CD8-positive, alpha-beta memory T cell (primary cell): ENCODE measurements at regions of chr22 and their contacts with region 1.

Region 1: GRCh38 chr22:22787786-22788459 is 99.7 kb upstream of the IGLL5 start:
- DNase-seq: peak; percentile 46 to 84 (median 57)
- H3K4me3 ChIP-seq: no peak overlapping the region
- H3K4me3 Mint-ChIP-seq: peak overlapping the region; percentile 22 to 83 (median 52)
- H3K27ac ChIP-seq: peak overlapping the region; percentile 38
- H3K27ac Mint-ChIP-seq: peak overlapping the region; percentile 78 to 99 (median 90)
- H3K4me1 ChIP-seq: peaks cover 57% of the 10 kb centered on the region
- H3K4me1 Mint-ChIP-seq: peaks cover 79 to 92% (median 80%) of the 10 kb centered on the region in 3 donors
- H3K27me3 ChIP-seq: no peaks in the 10 kb centered on the region
- H3K27me3 Mint-ChIP-seq: no peaks in the 10 kb centered on the region

Region 2: DNA sequence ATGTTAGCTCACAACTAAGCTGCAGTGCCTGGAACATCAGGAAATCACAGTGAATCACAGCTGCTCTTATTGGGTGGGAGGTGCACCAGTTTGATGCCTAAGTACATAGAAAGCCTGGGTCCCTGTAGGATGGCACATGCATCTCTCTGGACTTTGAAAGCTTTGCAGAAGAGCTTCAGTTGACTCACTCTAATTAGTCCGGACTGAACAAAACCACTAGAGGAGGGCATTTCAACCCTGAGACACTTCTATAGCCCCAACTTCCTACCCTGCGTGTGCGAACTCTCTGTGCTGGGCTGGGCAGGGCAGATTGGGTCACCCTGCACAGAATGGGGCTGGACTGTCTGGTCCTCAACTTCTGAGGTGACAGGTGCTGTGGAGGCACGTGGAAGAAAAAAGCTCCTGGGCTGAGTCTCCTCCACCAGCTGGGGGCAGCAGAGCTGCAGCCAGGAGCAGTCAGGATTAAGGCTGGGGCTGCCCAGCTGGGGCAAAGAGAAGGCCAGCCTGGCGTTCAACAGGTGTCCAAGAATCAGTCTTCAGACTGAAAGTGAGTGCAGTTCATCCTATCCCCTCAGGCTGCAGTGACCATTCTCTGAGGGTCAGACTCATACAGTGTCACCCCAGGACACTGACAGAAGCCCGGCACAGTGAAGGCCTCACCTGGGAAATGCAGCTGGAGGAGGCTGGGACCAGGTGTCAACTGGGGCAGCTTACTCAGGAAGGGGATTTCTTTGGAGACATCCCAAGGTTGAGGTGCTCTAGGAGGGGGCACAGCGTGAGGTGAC is 121.4 kb before region 1 on chr22:
- CTCF ChIA-PET with region 1: no interaction called
- POLR2A ChIA-PET with region 1: no interaction called
- DNase-seq: peak in 1 of 5 donors; percentile 14
- H3K4me3 ChIP-seq: no peak overlapping the region
- H3K4me3 Mint-ChIP-seq: no peak overlapping the region
- H3K27ac ChIP-seq: no peak overlapping the region
- H3K27ac Mint-ChIP-seq: peak overlapping the region in 1 of 8 donors; percentile 54
- H3K4me1 ChIP-seq: no peaks in the 10 kb centered on the region
- H3K4me1 Mint-ChIP-seq: no peaks in the 10 kb centered on the region
- H3K27me3 ChIP-seq: no peaks in the 10 kb centered on the region
- H3K27me3 Mint-ChIP-seq: peaks cover 1 to 25% of the 10 kb centered on the region in 2 donors

Region 3: DNA sequence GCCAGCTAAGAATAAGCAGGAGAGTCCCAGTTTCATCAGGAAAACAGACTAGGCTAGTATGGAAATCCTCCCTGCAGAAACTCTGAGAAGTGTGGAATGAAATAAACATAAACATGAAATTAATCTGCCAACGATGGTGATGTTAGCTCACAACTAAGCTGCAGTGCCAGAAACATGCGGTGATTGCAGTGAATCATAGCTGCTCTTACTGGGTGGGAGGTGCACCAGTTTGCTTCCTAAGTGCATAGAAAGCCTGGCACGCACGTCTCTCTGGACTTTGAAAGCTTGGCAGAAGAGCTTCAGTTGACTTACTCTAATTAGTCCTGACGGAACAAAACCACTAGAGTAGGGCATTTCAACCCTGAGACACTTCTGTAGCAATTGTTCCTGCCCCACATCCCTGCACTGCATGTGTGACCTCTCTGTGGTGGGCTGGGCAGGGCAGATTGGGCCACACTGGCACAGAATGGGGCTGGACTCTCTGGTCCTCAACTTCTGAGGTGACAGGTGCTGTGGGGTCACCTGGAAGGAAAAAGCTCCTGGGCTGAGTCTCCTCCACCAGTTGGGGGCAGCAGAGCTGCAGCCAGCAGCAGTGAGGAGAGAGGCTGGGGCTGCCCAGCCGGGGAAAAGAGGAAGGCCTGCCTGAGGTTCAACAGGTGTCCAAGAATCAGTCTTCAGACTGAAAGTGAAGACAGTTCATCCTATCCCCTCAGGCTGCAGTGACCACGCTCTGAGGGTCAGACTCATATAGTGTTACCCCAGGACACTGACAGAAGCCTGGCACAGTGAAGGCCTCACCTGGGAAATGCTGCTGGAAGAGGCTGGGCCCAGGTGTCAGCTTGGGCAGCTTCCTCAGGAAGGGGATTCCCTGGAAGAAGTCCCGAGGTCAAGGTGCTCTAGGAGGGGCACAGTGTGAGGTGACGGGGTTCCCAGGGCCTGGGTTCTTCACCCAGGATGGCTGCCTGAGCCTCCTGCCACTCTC is 103.1 kb before region 1 on chr22:
- CTCF ChIA-PET with region 1: no interaction called
- POLR2A ChIA-PET with region 1: no interaction called
- DNase-seq: no peak
- H3K4me3 ChIP-seq: no peak overlapping the region
- H3K4me3 Mint-ChIP-seq: no peak overlapping the region
- H3K27ac ChIP-seq: no peak overlapping the region
- H3K27ac Mint-ChIP-seq: no peak overlapping the region
- H3K4me1 ChIP-seq: no peaks in the 10 kb centered on the region
- H3K4me1 Mint-ChIP-seq: no peaks in the 10 kb centered on the region
- H3K27me3 ChIP-seq: no peaks in the 10 kb centered on the region
- H3K27me3 Mint-ChIP-seq: peaks cover 0 to 2% of the 10 kb centered on the region in 2 donors

Region 4: GRCh38 chr22:22737590-22737989 is 50.3 kb before region 1 on chr22:
- CTCF ChIA-PET with region 1: no interaction called
- POLR2A ChIA-PET with region 1: no interaction called
- DNase-seq: peak in 1 of 5 donors; percentile 45
- H3K4me3 ChIP-seq: no peak overlapping the region
- H3K4me3 Mint-ChIP-seq: peak overlapping the region in 6 of 7 donors; percentile 6 to 72 (median 47)
- H3K27ac ChIP-seq: no peak overlapping the region
- H3K27ac Mint-ChIP-seq: peak overlapping the region; percentile 16 to 86 (median 50)
- H3K4me1 ChIP-seq: peaks cover 36% of the 10 kb centered on the region
- H3K4me1 Mint-ChIP-seq: peaks cover 62 to 67% (median 65%) of the 10 kb centered on the region in 3 donors
- H3K27me3 ChIP-seq: no peaks in the 10 kb centered on the region
- H3K27me3 Mint-ChIP-seq: peaks cover 6 to 14% of the 10 kb centered on the region in 2 donors

Region 5: GRCh38 chr22:22770280-22770871 is 17.5 kb before region 1 on chr22:
- CTCF ChIA-PET with region 1: interaction called, 31 read pairs
- POLR2A ChIA-PET with region 1: interaction called, 4 read pairs
- DNase-seq: peak; percentile 25 to 62 (median 31)
- H3K4me3 ChIP-seq: no peak overlapping the region
- H3K4me3 Mint-ChIP-seq: peak overlapping the region in 2 of 7 donors; percentile 0 to 15
- H3K27ac ChIP-seq: no peak overlapping the region
- H3K27ac Mint-ChIP-seq: peak overlapping the region; percentile 76 to 91 (median 84)
- H3K4me1 ChIP-seq: peaks cover 4% of the 10 kb centered on the region
- H3K4me1 Mint-ChIP-seq: peaks cover 72 to 97% (median 84%) of the 10 kb centered on the region in 3 donors
- H3K27me3 ChIP-seq: no peaks in the 10 kb centered on the region
- H3K27me3 Mint-ChIP-seq: no peaks in the 10 kb centered on the region

Region 6: GRCh38 chr22:22802339-22802970 is 14.5 kb after region 1 on chr22:
- CTCF ChIA-PET with region 1: interaction called, 12 read pairs
- POLR2A ChIA-PET with region 1: no interaction called
- DNase-seq: peak in 1 of 5 donors; percentile 52
- H3K4me3 ChIP-seq: no peak overlapping the region
- H3K4me3 Mint-ChIP-seq: peak overlapping the region in 2 of 7 donors; percentile 9 to 29
- H3K27ac ChIP-seq: no peak overlapping the region
- H3K27ac Mint-ChIP-seq: peak overlapping the region; percentile 37 to 81 (median 53)
- H3K4me1 ChIP-seq: peaks cover 6% of the 10 kb centered on the region
- H3K4me1 Mint-ChIP-seq: peaks cover 73 to 90% (median 88%) of the 10 kb centered on the region in 3 donors
- H3K27me3 ChIP-seq: no peaks in the 10 kb centered on the region
- H3K27me3 Mint-ChIP-seq: no peaks in the 10 kb centered on the region

Region 7: GRCh38 chr22:22818861-22819855 is 31.2 kb after region 1 on chr22:
- CTCF ChIA-PET with region 1: interaction called, 21 read pairs
- POLR2A ChIA-PET with region 1: interaction called, 9 read pairs
- DNase-seq: peak in 3 of 5 donors; percentile 38 to 74 (median 62)
- H3K4me3 ChIP-seq: peak overlapping the region; percentile 28
- H3K4me3 Mint-ChIP-seq: peak overlapping the region; percentile 75 to 92 (median 86)
- H3K27ac ChIP-seq: peak overlapping the region; percentile 3
- H3K27ac Mint-ChIP-seq: peak overlapping the region; percentile 75 to 97 (median 88)
- H3K4me1 ChIP-seq: peaks cover 90% of the 10 kb centered on the region
- H3K4me1 Mint-ChIP-seq: peaks cover 97 to 99% (median 99%) of the 10 kb centered on the region in 3 donors
- H3K27me3 ChIP-seq: no peaks in the 10 kb centered on the region
- H3K27me3 Mint-ChIP-seq: no peaks in the 10 kb centered on the region

Region 8: DNA sequence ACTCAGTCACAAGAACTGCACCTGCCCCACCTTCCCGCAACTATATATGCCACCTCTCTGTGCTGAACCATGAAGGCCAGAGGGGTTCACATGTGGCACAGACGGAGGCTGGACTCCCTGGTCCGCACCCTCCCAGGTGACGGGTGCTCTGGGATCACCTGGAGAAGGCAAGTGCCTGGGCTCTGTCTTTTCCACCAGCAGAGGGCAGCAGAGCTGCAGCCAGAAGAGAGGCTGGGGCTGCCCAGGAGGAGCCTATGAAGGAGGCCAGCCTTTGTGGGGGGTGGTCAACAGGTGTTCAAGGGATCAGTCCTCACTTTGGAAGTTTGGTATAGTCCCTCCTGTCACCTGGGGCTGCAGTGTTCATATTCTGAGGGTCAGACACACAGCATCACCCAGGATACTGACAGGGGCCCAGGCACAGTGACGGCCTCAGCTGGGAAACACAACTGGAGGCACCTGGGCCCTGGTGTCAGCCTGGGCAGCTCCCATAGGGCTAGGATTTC is 60.5 kb after region 1 on chr22:
- CTCF ChIA-PET with region 1: interaction called, 26 read pairs
- POLR2A ChIA-PET with region 1: no interaction called
- DNase-seq: peak; percentile 49 to 83 (median 59)
- H3K4me3 ChIP-seq: no peak overlapping the region
- H3K4me3 Mint-ChIP-seq: peak overlapping the region in 3 of 7 donors; percentile 27 to 74 (median 38)
- H3K27ac ChIP-seq: no peak overlapping the region
- H3K27ac Mint-ChIP-seq: peak overlapping the region in 4 of 8 donors; percentile 47 to 67 (median 66)
- H3K4me1 ChIP-seq: peaks cover 10% of the 10 kb centered on the region
- H3K4me1 Mint-ChIP-seq: peaks cover 56 to 67% (median 65%) of the 10 kb centered on the region in 3 donors
- H3K27me3 ChIP-seq: no peaks in the 10 kb centered on the region
- H3K27me3 Mint-ChIP-seq: no peaks in the 10 kb centered on the region

Region 9: GRCh38 chr22:22870577-22871404 is 82.9 kb after region 1 on chr22:
- CTCF ChIA-PET with region 1: interaction called, 13 read pairs
- POLR2A ChIA-PET with region 1: no interaction called
- DNase-seq: no peak
- H3K4me3 ChIP-seq: no peak overlapping the region
- H3K4me3 Mint-ChIP-seq: no peak overlapping the region
- H3K27ac ChIP-seq: no peak overlapping the region
- H3K27ac Mint-ChIP-seq: peak overlapping the region in 3 of 8 donors; percentile 37 to 83 (median 38)
- H3K4me1 ChIP-seq: peaks cover 9% of the 10 kb centered on the region
- H3K4me1 Mint-ChIP-seq: peaks cover 28 to 39% (median 29%) of the 10 kb centered on the region in 3 donors
- H3K27me3 ChIP-seq: no peaks in the 10 kb centered on the region
- H3K27me3 Mint-ChIP-seq: peaks cover 0 to 4% of the 10 kb centered on the region in 2 donors